Common myeloid progenitor, CD34-positive (primary cell): ENCODE measurements at regions of chr15 and their contacts with region 1.

Region 1: DNA sequence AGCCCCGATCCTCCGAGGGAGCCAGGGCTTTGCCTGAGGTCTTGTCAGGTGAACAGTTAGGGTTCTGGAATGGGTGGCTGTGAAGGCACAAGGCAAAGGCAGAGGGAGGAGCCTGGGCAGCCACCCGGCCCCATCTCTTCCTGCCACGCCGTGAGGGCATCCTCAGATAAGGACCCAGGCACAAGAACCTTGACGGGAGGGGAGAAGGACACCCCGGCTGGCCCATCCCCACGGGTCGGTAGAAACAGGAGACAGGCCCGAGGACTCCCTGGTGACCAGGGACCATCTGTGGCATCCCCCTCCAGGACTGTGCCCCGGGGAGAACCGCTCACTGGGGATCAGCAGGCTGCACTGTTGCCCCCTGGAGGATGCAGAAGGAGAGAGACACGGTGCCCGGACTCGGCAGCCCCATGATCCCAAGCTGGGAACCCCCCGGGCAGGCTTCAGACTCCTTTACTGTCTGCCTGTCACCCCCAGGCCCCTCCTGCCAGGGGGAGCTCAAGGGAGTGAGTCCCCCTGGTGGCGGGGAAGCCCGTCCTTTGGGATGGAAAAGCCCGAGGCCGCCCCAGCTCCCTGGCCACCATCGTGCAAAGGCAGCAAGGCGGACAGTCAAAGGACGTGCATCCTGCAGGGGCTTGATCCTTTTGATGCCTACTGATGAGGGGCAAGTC is 12.3 kb upstream of the PCSK6 start:
- DNase-seq: peak; percentile 59 to 76 (median 74)
- H3K4me3 ChIP-seq: no peak overlapping the region
- H3K27ac ChIP-seq: no peak overlapping the region
- H3K4me1 ChIP-seq: peaks cover 3 to 33% (median 29%) of the 10 kb centered on the region in 4 experiments
- H3K27me3 ChIP-seq: peaks cover 4 to 82% (median 37%) of the 10 kb centered on the region in 5 experiments

Region 2: GRCh38 chr15:101294731-101295606 is 206.9 kb before region 1 on chr15 and contains the start of gene SNRPA1:
- CTCF ChIA-PET with region 1: interaction called, 26 read pairs
- POLR2A ChIA-PET with region 1: no interaction called
- DNase-seq: peak; percentile 93 to 97 (median 97)
- H3K4me3 ChIP-seq: peak within 1 kb of the TSS; percentile 88 to 96 (median 95)
- H3K27ac ChIP-seq: peak within 1 kb of the TSS; percentile 86 to 95
- H3K4me1 ChIP-seq: peaks cover 13 to 29% (median 25%) of the 10 kb centered on the region in 4 experiments
- H3K27me3 ChIP-seq: no peaks in the 10 kb centered on the region

Region 3: GRCh38 chr15:101320501-101321052 is 181.3 kb before region 1 on chr15:
- CTCF ChIA-PET with region 1: interaction called, 24 read pairs
- POLR2A ChIA-PET with region 1: no interaction called
- DNase-seq: peak; percentile 91 to 97 (median 96)
- H3K4me3 ChIP-seq: peak overlapping the region in 1 of 7 experiments; percentile 48
- H3K27ac ChIP-seq: no peak overlapping the region
- H3K4me1 ChIP-seq: peaks cover 0 to 17% (median 12%) of the 10 kb centered on the region in 4 experiments
- H3K27me3 ChIP-seq: peaks cover 0 to 88% (median 25%) of the 10 kb centered on the region in 5 experiments

Region 4: DNA sequence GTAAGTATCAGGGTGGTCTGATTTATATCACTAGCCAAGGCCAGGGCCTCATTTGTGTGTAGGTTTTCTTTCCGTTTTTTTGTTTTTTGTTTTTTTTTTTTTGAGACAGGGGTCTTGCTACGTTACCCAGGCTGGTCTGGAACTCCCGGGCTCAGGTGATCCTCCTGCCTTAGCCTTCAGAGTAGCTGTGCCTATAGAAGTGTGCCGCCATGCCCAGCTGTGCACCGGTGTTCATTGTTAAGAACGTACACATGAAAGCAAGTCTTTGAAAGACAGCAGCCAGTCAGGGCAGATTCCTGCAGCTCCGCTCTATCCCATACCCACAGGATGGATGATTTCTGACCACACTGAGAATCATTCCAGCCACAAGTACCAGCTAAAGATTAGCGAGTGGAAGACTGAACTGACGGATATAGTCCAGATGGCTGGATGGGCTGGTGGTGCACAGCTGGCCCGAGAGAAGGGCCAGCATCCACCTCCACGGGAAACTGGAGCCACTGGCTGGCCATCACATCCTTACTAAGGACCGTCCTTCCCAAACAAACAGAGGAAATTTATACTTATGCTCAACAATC is 107.7 kb before region 1 on chr15:
- CTCF ChIA-PET with region 1: interaction called, 13 read pairs
- POLR2A ChIA-PET with region 1: no interaction called
- DNase-seq: no peak
- H3K4me3 ChIP-seq: no peak overlapping the region
- H3K27ac ChIP-seq: no peak overlapping the region
- H3K4me1 ChIP-seq: peaks cover 0 to 43% (median 35%) of the 10 kb centered on the region in 4 experiments
- H3K27me3 ChIP-seq: peaks cover 0 to 3% (median 0%) of the 10 kb centered on the region in 5 experiments

Region 5: GRCh38 chr15:101439920-101440319 is 61.9 kb before region 1 on chr15:
- CTCF ChIA-PET with region 1: interaction called, 11 read pairs
- POLR2A ChIA-PET with region 1: no interaction called
- DNase-seq: no peak
- H3K4me3 ChIP-seq: no peak overlapping the region
- H3K27ac ChIP-seq: no peak overlapping the region
- H3K4me1 ChIP-seq: peaks cover 0 to 10% (median 2%) of the 10 kb centered on the region in 4 experiments
- H3K27me3 ChIP-seq: peaks cover 0 to 22% (median 6%) of the 10 kb centered on the region in 5 experiments

Region 6: DNA sequence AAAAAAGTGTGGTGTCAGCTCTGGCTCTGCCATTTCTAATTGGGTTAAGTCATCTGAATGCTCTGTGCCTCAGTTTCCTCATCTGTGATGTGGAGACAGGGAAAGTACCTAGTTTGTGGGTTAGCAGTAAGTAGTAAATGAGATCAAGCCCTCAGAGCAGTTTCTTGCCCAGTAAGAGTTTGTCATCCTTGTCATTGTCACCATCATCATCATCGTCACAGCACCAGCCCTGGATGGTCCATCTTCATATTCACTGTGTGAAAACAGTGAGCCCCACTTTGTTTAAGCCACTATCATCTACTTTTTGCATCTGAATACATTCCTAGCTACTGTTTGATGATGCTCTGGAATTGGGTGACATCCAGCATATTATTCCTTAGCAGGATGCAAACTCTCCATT is 33.8 kb before region 1 on chr15:
- CTCF ChIA-PET with region 1: interaction called, 10 read pairs
- POLR2A ChIA-PET with region 1: no interaction called
- DNase-seq: no peak
- H3K4me3 ChIP-seq: no peak overlapping the region
- H3K27ac ChIP-seq: no peak overlapping the region
- H3K4me1 ChIP-seq: no peaks in the 10 kb centered on the region
- H3K27me3 ChIP-seq: peaks cover 0 to 77% (median 9%) of the 10 kb centered on the region in 5 experiments

Region 7: DNA sequence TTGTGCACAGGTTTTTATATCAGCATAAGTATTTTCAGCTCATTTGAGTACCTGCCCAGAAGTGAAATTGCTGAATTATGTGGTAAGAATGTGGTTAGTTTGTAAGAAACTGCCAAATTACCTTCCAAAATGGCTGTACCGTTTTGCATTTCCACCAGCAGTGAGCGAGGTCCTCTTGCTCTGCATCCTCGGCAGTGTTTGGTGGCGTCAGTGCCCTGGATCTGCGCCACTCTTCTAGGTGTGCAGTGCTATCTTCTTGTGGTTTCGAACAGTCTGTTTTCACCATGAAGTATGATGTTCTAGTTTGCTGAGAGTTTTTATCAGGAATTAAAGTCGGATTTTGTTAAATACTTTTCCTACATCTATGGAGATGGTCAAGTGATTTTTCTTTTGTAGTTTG is 12.5 kb after region 1 on chr15:
- CTCF ChIA-PET with region 1: interaction called, 15 read pairs
- POLR2A ChIA-PET with region 1: no interaction called
- DNase-seq: no peak
- H3K4me3 ChIP-seq: no peak overlapping the region
- H3K27ac ChIP-seq: no peak overlapping the region
- H3K4me1 ChIP-seq: no peaks in the 10 kb centered on the region
- H3K27me3 ChIP-seq: peaks cover 0 to 34% (median 5%) of the 10 kb centered on the region in 5 experiments